ENCODE measurements at regions of chr15 and their contacts with region 1.

Region 1: GRCh38 chr15:54064365-54064764 is 86.1 kb downstream of the UNC13C start:
- DNase-seq: no peak
- ATAC-seq: no peak
- H3K4me3 ChIP-seq: no peak overlapping the region
- H3K27ac ChIP-seq: no peak overlapping the region
- H3K4me1 ChIP-seq: no peaks in the 10 kb centered on the region
- H3K27me3 ChIP-seq: no peaks in the 10 kb centered on the region
- CTCF ChIP-seq: no peak
- EP300 ChIP-seq: no peak
- POLR2A ChIP-seq: no peak
- RAD21 ChIP-seq: no peak

Region 2: GRCh38 chr15:53982876-53983275 is 81.5 kb before region 1 on chr15:
- CTCF ChIA-PET with region 1: interaction called, 4 read pairs
- POLR2A ChIA-PET with region 1: interaction called, 3 read pairs
- RAD21 ChIA-PET with region 1: interaction called, 15 read pairs
- SMC1A ChIA-PET with region 1: interaction called, 7 read pairs
- in situ Hi-C with region 1: no loop called
- intact Hi-C with region 1: no loop called
- DNase-seq: no peak
- ATAC-seq: no peak; the same call in 2 of the 3 replicates
- H3K4me3 ChIP-seq: no peak overlapping the region
- H3K27ac ChIP-seq: no peak overlapping the region
- H3K4me1 ChIP-seq: no peaks in the 10 kb centered on the region
- H3K27me3 ChIP-seq: no peaks in the 10 kb centered on the region
- CTCF ChIP-seq: no peak
- EP300 ChIP-seq: no peak
- POLR2A ChIP-seq: no peak
- RAD21 ChIP-seq: no peak

Region 3: GRCh38 chr15:54045397-54045796 is 19.0 kb before region 1 on chr15:
- CTCF ChIA-PET with region 1: no interaction called
- POLR2A ChIA-PET with region 1: no interaction called
- RAD21 ChIA-PET with region 1: no interaction called
- SMC1A ChIA-PET with region 1: no interaction called
- in situ Hi-C with region 1: no loop called
- intact Hi-C with region 1: no loop called
- DNase-seq: no peak
- ATAC-seq: peak; percentile 45; the same call in 2 of the 3 replicates
- H3K4me3 ChIP-seq: no peak overlapping the region
- H3K27ac ChIP-seq: no peak overlapping the region
- H3K4me1 ChIP-seq: no peaks in the 10 kb centered on the region
- H3K27me3 ChIP-seq: no peaks in the 10 kb centered on the region
- CTCF ChIP-seq: no peak
- EP300 ChIP-seq: no peak
- POLR2A ChIP-seq: no peak
- RAD21 ChIP-seq: no peak